Caco-2 (cell line): ENCODE measurements at regions of chr2 and their contacts with region 1.

Region 1: GRCh38 chr2:196293751-196294512 is 122.6 kb upstream of the STK17B start:
- DNase-seq: no peak
- H3K4me3 ChIP-seq: no peak overlapping the region
- H3K4me3 Mint-ChIP-seq: no peak overlapping the region
- H3K27ac Mint-ChIP-seq: no peak overlapping the region
- H3K4me1 ChIP-seq: peaks cover 28% of the 10 kb centered on the region
- H3K4me1 Mint-ChIP-seq: peaks cover 21% of the 10 kb centered on the region
- H3K27me3 ChIP-seq: no peaks in the 10 kb centered on the region
- H3K27me3 Mint-ChIP-seq: no peaks in the 10 kb centered on the region
- CTCF ChIP-seq: no peak

Region 2: DNA sequence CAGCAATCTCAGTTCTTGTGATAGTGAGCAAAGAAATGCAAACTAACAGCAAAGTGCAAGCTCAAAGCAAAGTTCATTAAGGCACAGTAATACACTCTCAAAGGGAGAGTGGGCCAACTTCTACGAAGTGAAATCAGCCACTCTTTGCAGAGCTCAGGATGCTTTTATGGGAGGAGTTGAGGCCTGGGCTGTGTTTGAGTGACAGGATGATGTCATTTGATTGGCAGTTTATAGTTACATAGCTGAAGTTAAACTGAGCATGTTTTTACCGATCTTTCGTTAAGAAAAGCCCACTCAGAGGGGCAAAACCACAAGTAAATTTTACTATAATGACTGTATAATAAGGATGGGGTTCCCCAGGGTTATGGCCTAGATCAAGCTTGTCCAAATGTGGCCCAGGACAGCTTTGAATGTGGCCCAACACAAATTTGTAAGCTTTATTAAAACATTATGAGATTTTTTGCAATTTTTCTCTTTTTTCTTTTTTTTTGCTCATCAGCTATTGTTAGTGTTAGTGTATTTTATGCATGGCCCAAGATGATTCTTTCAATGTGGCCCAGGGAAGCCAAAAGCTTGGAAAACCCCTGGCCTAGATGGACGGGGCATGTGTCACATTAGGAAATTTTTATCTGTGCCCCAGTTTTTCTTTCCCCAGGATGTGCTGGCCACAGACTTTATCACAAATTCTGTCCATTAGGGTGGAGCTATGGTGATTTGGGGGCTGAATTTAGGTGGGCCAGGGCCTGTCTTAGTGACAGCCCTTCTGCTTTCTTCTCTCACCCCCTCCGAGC is 217.0 kb before region 1 on chr2:
- CTCF ChIA-PET with region 1: no interaction called
- POLR2A ChIA-PET with region 1: no interaction called
- intact Hi-C with region 1: loop called (anchors 1 kb)
- DNase-seq: no peak
- H3K4me3 ChIP-seq: no peak overlapping the region
- H3K4me3 Mint-ChIP-seq: no peak overlapping the region
- H3K27ac Mint-ChIP-seq: no peak overlapping the region
- H3K4me1 ChIP-seq: peaks cover 8% of the 10 kb centered on the region
- H3K4me1 Mint-ChIP-seq: peaks cover 7% of the 10 kb centered on the region
- H3K27me3 ChIP-seq: no peaks in the 10 kb centered on the region
- H3K27me3 Mint-ChIP-seq: no peaks in the 10 kb centered on the region
- CTCF ChIP-seq: no peak

Region 3: DNA sequence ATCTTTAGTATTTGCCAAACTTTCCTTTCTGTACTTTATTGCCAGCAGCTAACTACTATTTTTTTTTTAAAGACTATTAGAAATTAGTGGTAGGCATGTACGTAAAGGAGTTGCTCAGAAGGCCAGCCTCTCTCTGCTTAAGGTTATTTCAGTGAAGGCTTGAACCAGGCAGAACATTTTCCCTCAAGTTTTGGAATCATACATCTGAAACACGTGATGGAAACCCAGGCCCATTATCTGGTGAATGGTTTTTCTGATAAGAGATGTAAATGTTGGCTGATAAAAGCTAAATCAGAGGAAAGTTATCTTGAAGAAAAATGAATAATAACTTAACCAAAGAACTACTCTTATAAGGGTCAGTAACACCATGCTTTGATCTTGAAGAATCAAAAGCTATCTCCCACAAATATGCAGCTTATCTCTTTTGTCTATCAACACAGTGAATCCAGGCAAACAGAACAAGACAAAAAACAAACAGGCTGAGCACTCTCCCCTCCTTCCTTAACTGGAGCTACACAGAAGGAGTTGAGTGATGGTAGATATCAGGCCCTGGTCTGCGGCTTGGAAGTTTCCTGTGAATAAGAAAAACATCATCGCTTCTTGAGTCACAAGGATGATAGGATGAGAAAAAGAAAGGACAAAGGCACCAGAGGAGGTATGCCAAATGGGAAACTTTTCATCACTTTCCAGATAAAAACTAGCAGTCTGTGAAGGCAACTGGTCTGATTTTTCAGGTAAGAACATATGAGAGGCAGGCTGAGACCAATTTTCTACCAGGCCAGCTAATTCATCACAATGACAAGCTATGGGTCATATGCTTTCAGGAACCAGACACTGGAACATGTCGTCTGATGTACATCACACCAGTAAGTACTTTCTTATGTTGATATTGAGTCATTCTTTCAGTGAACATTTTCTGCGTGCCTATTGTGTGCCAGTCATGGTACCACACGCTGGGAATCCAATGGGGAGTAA is 34.1 kb before region 1 on chr2:
- CTCF ChIA-PET with region 1: no interaction called
- POLR2A ChIA-PET with region 1: no interaction called
- intact Hi-C with region 1: loop called (anchors 1 kb)
- DNase-seq: peak; percentile 88 to 91
- H3K4me3 ChIP-seq: peak overlapping the region; percentile 36
- H3K4me3 Mint-ChIP-seq: peak overlapping the region; percentile 90
- H3K27ac Mint-ChIP-seq: peak overlapping the region; percentile 90
- H3K4me1 ChIP-seq: peaks cover 31% of the 10 kb centered on the region
- H3K4me1 Mint-ChIP-seq: peaks cover 17% of the 10 kb centered on the region
- H3K27me3 ChIP-seq: no peaks in the 10 kb centered on the region
- H3K27me3 Mint-ChIP-seq: no peaks in the 10 kb centered on the region
- CTCF ChIP-seq: no peak

Region 4: GRCh38 chr2:196322973-196323810 is 29.3 kb after region 1 on chr2:
- CTCF ChIA-PET with region 1: no interaction called
- POLR2A ChIA-PET with region 1: no interaction called
- intact Hi-C with region 1: no loop called
- DNase-seq: no peak
- H3K4me3 ChIP-seq: no peak overlapping the region
- H3K4me3 Mint-ChIP-seq: no peak overlapping the region
- H3K27ac Mint-ChIP-seq: no peak overlapping the region
- H3K4me1 ChIP-seq: peaks cover 12% of the 10 kb centered on the region
- H3K4me1 Mint-ChIP-seq: peaks cover 7% of the 10 kb centered on the region
- H3K27me3 ChIP-seq: no peaks in the 10 kb centered on the region
- H3K27me3 Mint-ChIP-seq: no peaks in the 10 kb centered on the region
- CTCF ChIP-seq: no peak

Region 5: GRCh38 chr2:196337208-196337953 is 43.4 kb after region 1 on chr2:
- CTCF ChIA-PET with region 1: interaction called, 5 read pairs
- POLR2A ChIA-PET with region 1: no interaction called
- intact Hi-C with region 1: loop called (anchors 1 kb)
- DNase-seq: peak in 1 of 2 experiments; percentile 34
- H3K4me3 ChIP-seq: no peak overlapping the region
- H3K4me3 Mint-ChIP-seq: no peak overlapping the region
- H3K27ac Mint-ChIP-seq: no peak overlapping the region
- H3K4me1 ChIP-seq: peaks cover 7% of the 10 kb centered on the region; the same call in 1 of the 2 replicates
- H3K4me1 Mint-ChIP-seq: peaks cover 7% of the 10 kb centered on the region
- H3K27me3 ChIP-seq: no peaks in the 10 kb centered on the region
- H3K27me3 Mint-ChIP-seq: no peaks in the 10 kb centered on the region
- CTCF ChIP-seq: peak; percentile 25 to 72

Region 6: DNA sequence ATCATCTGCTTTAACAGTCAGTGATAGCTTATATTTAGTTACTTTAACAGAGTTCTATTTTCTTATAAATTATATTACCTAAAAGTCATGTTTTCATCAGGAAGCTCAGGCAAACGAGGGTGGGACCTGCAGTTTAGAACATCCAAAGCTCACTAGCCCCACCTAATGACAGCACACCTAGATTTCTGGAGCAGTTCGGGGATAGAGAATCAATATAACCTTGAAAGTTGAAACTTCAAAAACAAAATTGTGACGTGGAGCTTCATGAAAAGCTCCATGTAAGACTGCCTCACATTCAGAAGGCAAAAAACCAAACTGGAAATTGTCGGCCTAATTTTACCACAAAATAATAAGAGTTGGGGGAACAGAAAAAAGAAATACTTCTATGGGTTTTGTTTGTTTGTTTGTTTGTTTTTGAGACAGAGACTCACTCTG is 159.7 kb after region 1 on chr2:
- CTCF ChIA-PET with region 1: interaction called, 4 read pairs
- POLR2A ChIA-PET with region 1: no interaction called
- intact Hi-C with region 1: loop called (anchors 1 kb)
- DNase-seq: peak; percentile 42 to 57
- H3K4me3 ChIP-seq: no peak overlapping the region
- H3K4me3 Mint-ChIP-seq: no peak overlapping the region
- H3K27ac Mint-ChIP-seq: no peak overlapping the region
- H3K4me1 ChIP-seq: no peaks in the 10 kb centered on the region
- H3K4me1 Mint-ChIP-seq: no peaks in the 10 kb centered on the region
- H3K27me3 ChIP-seq: no peaks in the 10 kb centered on the region
- H3K27me3 Mint-ChIP-seq: peaks cover 2% of the 10 kb centered on the region
- CTCF ChIP-seq: peak; percentile 65 to 69

Region 7: GRCh38 chr2:196528486-196529223 is 234.7 kb after region 1 on chr2:
- CTCF ChIA-PET with region 1: no interaction called
- POLR2A ChIA-PET with region 1: no interaction called
- intact Hi-C with region 1: no loop called
- DNase-seq: no peak
- H3K4me3 ChIP-seq: no peak overlapping the region
- H3K4me3 Mint-ChIP-seq: no peak overlapping the region
- H3K27ac Mint-ChIP-seq: no peak overlapping the region
- H3K4me1 ChIP-seq: no peaks in the 10 kb centered on the region
- H3K4me1 Mint-ChIP-seq: no peaks in the 10 kb centered on the region
- H3K27me3 ChIP-seq: no peaks in the 10 kb centered on the region
- H3K27me3 Mint-ChIP-seq: peaks cover 4% of the 10 kb centered on the region
- CTCF ChIP-seq: no peak

Region 8: DNA sequence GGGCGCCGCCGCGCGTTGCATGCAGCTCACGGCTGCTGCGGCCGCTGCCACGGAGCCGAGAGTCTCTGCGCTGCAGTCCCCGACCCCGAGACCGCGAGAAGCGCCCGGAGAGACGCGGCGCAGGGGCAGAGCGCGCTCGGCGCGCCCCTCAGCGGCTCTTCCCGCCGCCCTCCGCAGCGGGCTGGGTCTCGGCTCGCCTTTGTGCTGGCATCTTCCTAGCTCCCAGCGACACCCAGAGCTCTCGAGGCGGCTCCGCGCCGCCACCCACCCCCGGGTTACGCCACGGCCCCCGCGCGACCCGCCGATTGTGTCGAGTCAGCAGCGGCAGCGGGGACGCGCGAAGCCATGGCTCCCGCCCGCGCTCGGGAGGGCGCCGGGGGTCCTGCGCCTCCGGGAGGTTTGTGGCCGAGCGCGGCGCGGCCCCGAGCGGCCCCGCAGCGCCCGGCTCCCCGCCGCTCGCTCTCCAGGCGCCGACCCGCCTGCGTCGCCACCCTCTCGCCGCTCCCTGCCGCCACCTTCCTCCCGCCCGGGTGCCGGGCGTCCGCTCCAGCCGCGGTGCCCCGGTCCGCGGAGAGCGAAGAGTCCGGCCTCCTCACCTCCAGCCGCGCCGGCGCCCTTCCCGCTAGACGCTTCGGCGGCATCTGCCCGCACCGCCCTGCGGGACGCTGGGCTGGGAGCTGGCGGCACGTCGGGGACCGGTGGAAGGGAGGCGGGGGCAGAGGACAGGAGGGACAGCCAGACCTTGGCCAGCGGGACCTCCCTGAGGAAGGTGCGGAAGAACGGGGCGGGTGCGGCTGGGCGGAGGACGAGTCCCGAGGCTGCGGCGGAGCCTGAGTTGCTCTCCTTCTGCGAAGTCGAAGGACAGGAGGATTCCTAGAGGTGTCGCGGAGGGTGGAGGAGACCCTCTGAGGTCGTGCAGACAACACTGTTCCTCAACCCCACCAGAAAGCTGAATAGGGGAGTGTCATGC is 299.3 kb after region 1 on chr2:
- CTCF ChIA-PET with region 1: no interaction called
- POLR2A ChIA-PET with region 1: no interaction called
- intact Hi-C with region 1: loop called (anchors 2 kb)
- DNase-seq: peak; percentile 37 to 48
- H3K4me3 ChIP-seq: peak within 1 kb of the TSS; percentile 74
- H3K4me3 Mint-ChIP-seq: peak within 1 kb of the TSS; percentile 76
- H3K27ac Mint-ChIP-seq: no peak within 1 kb of the TSS
- H3K4me1 ChIP-seq: peaks cover 8% of the 10 kb centered on the region; the same call in 1 of the 2 replicates
- H3K4me1 Mint-ChIP-seq: peaks cover 8% of the 10 kb centered on the region
- H3K27me3 ChIP-seq: peaks cover 2% of the 10 kb centered on the region
- H3K27me3 Mint-ChIP-seq: peaks cover 32% of the 10 kb centered on the region
- CTCF ChIP-seq: no peak

Region 9: GRCh38 chr2:196758474-196759377 is 464.8 kb after region 1 on chr2:
- CTCF ChIA-PET with region 1: no interaction called
- POLR2A ChIA-PET with region 1: no interaction called
- intact Hi-C with region 1: loop called (anchors 2 kb)
- DNase-seq: no peak
- H3K4me3 ChIP-seq: no peak overlapping the region
- H3K4me3 Mint-ChIP-seq: no peak overlapping the region
- H3K27ac Mint-ChIP-seq: no peak overlapping the region
- H3K4me1 ChIP-seq: no peaks in the 10 kb centered on the region
- H3K4me1 Mint-ChIP-seq: no peaks in the 10 kb centered on the region
- H3K27me3 ChIP-seq: no peaks in the 10 kb centered on the region
- H3K27me3 Mint-ChIP-seq: no peaks in the 10 kb centered on the region
- CTCF ChIP-seq: peak in 1 of 2 experiments; percentile 24